BJ (cell line): ENCODE measurements at regions of chr4 and their contacts with region 1.

Region 1: DNA sequence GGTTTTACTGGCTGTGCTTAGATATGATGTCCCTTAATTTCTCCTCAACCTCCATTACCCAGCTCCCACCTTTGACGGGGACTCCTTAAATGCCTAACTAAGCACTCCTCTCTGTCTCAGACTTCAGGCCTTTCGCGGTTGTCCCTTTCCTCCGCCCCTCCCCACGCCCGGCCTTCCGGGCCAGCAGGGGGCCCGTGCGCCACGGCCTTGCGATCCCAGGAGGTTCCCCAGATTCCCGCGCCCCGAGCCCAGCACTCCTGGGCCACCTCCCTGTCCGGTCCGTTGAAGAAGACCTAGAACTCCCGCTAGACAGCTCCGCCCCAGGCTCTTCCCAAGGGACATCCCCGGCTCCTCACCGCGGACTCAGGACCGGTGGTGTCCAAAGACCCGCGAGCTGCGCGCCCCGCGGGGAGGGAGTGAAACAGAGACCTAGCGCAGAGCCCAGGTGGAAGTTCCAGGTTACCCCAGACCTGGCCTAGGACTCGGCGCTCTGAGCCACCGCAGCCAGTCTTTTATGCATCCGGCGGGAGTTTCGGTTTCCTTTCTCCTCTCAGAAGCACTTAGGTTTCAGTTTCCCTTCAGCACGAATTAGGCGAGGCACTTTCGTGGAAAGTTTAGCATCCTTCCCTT is at the start of gene DDX60:
- DNase-seq: peak; percentile 16
- H3K4me3 ChIP-seq: peak within 1 kb of the TSS; percentile 94
- H3K27me3 ChIP-seq: no peaks in the 10 kb centered on the region
- CTCF ChIP-seq: peak; percentile 70
- polyA plus RNA-seq, gene DDX60: 2.7 and 9.1 TPM in 2 replicates

Region 2: DNA sequence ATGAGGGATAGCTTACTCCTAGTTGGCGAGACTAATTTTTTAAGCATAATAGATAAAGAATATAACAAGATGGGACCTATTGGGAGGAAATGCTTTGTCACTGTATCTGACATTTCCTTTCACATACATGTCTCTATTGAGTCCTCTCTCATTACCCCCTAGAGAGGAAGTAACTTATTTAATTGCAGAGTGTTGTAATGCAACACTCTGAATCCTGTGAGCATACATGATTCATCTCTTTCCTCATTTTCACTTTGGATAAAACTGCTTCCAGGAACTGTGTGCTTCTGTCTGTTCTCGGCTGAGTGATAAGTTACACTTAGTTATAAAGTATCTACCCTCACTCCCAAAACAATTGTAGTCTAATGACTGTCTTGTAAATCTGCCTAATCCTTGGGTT is 492.1 kb before region 1 on chr4:
- CTCF ChIA-PET with region 1: no interaction called
- POLR2A ChIA-PET with region 1: no interaction called
- DNase-seq: no peak
- H3K4me3 ChIP-seq: no peak overlapping the region
- H3K27me3 ChIP-seq: no peaks in the 10 kb centered on the region
- CTCF ChIP-seq: no peak

Region 3: GRCh38 chr4:168304744-168305459 is 13.5 kb before region 1 on chr4:
- CTCF ChIA-PET with region 1: interaction called, 10 read pairs
- POLR2A ChIA-PET with region 1: no interaction called
- DNase-seq: peak; percentile 44
- H3K4me3 ChIP-seq: no peak overlapping the region
- H3K27me3 ChIP-seq: no peaks in the 10 kb centered on the region
- CTCF ChIP-seq: no peak